Gastrocnemius medialis (tissue), 4 donors: ENCODE measurements at regions of chr2 and their contacts with region 1.

Region 1: GRCh38 chr2:116223912-116224311 is 1590.6 kb upstream of the DDX18 start:
- DNase-seq: no peak
- ATAC-seq: no peak
- H3K4me3 ChIP-seq: no peak overlapping the region
- H3K27ac ChIP-seq: no peak overlapping the region
- H3K4me1 ChIP-seq: no peaks in the 10 kb centered on the region
- H3K27me3 ChIP-seq: no peaks in the 10 kb centered on the region
- CTCF ChIP-seq: no peak
- POLR2A ChIP-seq: no peak

Region 2: GRCh38 chr2:116211719-116212118 is 12.2 kb before region 1 on chr2:
- in situ Hi-C with region 1: no loop called
- intact Hi-C with region 1: loop called (anchors 1 kb)
- DNase-seq: no peak
- ATAC-seq: no peak
- H3K4me3 ChIP-seq: no peak overlapping the region
- H3K27ac ChIP-seq: no peak overlapping the region
- H3K4me1 ChIP-seq: no peaks in the 10 kb centered on the region
- H3K27me3 ChIP-seq: no peaks in the 10 kb centered on the region
- CTCF ChIP-seq: no peak
- POLR2A ChIP-seq: no peak